ENCODE measurements at regions of chr14 and their contacts with region 1.

Region 1: DNA sequence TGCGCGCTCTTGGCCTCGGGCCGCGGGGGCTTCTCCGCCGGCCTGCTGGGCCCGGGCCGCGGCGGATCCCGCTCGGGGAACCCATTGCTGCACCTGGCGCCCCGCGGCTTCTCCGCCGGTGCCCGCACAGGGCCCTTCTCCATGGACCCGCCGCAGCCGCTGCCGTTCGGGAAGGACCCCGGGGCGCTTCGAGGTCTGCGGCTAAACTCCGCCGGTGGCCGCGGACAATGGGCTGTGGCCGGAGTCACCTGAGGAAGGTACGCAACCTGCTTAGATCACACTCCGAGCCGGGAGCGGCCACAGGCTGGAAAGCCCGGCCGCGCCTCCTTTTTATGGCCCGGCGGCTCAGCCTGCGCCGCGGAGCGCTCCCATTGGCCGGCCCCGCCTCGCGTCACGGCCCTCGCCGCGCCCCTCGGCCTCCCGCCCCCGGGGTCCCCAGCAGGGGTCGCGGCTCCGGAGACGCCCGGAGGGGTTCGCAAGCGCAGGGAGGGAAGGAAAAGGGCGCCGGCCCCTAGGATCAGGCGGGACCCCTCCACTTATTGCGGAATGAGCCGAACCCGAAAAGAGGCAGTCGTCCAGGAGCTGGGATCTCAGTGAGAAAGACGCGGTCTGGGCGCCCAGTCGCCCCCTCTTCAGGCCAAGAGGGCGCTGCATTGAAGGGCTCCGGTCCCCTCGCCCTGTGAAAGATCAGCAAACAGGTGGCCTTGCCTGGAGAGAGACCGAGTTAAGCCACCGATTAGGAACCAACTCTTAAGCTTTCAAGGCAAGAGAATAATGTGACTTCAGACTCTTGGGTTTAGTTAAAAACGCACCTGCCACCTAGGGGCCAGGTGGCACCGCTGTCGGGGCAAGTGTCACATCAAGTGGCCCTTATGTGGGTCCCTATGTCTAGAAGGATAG is at the start of gene GCH1:
- DNase-seq: peak; percentile 81
- H3K4me3 Mint-ChIP-seq: peak within 1 kb of the TSS; percentile 89
- H3K27ac Mint-ChIP-seq: peak within 1 kb of the TSS; percentile 85
- H3K4me1 Mint-ChIP-seq: peaks cover 46% of the 10 kb centered on the region
- H3K27me3 Mint-ChIP-seq: no peaks in the 10 kb centered on the region
- total RNA-seq, gene GCH1: 61.4 and 62.4 TPM in 2 replicates

Region 2: DNA sequence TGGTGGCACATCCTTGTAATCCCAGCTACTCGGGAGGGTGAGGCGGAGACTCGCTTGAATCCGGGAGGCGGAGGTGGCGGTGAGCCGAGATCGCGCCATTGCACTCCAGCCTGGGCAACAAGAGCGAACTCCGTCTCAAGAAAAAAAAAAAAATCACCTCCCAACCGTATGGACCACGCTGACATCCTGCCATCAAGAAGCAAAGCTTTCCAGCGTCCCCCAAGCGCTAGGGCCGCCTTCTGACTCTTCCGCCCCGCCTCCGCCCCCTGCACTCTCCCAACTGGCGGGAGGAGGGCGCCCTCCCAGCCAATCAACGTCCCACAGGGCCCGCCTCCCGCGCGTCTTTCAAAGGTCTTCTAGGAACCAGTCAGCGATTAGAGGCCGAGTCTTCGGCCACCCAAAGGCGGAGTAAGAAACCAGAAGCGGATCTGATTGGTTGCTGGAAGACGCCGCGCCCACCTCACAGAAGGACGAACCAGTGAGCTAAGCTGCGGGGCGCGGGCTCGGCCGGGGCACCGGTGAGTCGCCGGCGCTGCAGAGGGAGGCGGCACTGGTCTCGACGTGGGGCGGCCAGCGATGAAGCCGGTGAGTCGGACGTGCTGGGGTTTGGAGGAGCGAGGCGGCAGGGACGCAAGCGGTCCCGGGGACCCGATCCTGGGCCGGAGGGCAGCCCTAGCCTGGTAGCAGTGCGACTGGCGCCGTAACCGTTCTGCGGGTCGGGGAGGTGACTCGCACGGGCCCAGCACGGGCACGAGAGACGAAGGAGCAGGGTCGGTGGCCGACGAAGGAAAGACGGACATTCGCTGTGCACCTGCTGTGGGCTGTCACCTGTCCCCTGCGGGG is 506.1 kb before region 1 on chr14 and contains the start of gene CDKN3:
- intact Hi-C with region 1: loop called (anchors 1 kb)
- DNase-seq: peak; percentile 98
- H3K4me3 Mint-ChIP-seq: peak within 1 kb of the TSS; percentile 81
- H3K27ac Mint-ChIP-seq: peak within 1 kb of the TSS; percentile 85
- H3K4me1 Mint-ChIP-seq: peaks cover 16% of the 10 kb centered on the region
- H3K27me3 Mint-ChIP-seq: peaks cover 3% of the 10 kb centered on the region
- total RNA-seq, gene CDKN3: 36.5 and 39.2 TPM in 2 replicates

Region 3: DNA sequence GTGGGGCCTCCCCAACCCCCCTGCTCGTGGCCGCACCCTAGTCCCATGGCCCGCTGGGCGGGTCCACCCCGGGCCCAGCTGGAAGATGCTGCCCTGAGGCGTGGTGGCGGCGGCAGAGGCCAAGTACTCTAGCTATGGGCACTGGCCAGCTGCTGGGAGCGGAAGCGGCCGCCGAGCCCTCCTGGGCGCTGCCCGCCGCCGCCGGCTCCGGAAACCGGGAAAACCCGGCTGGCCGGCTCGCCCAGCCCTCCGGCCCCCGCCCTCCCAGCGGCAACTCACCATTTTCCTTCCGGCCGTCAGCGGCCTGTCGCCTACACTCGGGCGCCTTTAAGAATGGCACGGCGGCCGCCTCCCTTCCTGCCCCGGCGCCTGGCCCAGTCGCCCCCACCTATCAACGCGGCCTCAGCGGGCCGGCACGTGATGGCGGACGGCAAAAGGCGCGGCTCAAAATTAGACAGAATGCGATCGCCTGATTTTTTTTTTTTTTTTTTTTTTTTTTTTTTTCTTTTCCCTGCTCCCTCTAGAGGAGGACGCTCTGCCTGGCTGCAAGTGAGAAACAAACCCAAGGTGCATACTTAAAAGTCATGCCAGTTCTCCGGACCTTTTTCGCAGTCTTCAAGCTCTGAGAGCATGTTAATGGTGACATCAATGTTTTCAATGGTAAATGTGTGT is 414.0 kb before region 1 on chr14 and contains the start of gene GMFB:
- intact Hi-C with region 1: loop called (anchors 2 kb)
- DNase-seq: peak; percentile 79
- H3K4me3 Mint-ChIP-seq: peak within 1 kb of the TSS; percentile 87
- H3K27ac Mint-ChIP-seq: peak within 1 kb of the TSS; percentile 88
- H3K4me1 Mint-ChIP-seq: peaks cover 57% of the 10 kb centered on the region
- H3K27me3 Mint-ChIP-seq: no peaks in the 10 kb centered on the region
- total RNA-seq, gene GMFB: 39.5 and 39.7 TPM in 2 replicates

Region 4: DNA sequence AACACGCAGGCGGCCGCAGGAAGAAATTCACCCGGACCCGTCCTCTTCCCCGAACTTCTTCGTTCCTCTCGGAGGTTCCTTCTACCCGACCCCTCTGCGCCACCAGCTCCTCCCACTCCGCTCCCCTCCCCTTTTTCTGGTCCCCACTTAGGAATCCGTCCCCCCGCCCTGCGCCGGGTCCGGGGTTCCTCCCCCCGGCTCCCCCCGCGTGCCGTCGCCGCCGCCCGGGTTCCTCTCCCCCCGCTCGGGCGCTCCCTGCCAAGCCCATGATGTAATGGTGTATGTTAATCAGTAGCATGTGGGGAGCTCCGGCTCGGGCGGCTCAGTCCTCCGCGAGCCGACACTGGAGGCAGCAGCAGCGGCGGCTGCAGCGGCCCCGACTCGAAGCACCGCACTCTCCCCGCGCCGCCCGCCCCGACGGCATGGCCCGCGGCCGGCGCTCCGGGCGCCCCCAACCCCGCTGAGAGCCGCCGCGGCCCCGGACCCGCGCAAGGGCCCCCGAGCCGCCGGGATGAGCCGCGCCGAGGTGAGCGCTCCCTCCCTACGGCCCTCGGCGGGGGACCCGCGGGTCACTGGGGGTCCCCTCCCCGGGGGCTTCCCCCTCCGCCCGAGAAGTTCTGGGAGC is 336.9 kb before region 1 on chr14:
- intact Hi-C with region 1: loop called (anchors 2 kb)
- DNase-seq: peak; percentile 61
- H3K4me3 Mint-ChIP-seq: peak overlapping the region; percentile 75
- H3K27ac Mint-ChIP-seq: no peak overlapping the region
- H3K4me1 Mint-ChIP-seq: peaks cover 21% of the 10 kb centered on the region
- H3K27me3 Mint-ChIP-seq: peaks cover 54% of the 10 kb centered on the region

Region 5: GRCh38 chr14:55026793-55027561 is 124.2 kb after region 1 on chr14 and contains the starts of genes SOCS4 and WDHD1:
- intact Hi-C with region 1: loop called (anchors 2 kb)
- DNase-seq: peak; percentile 98
- H3K4me3 Mint-ChIP-seq: peak within 1 kb of the TSS; percentile 88
- H3K27ac Mint-ChIP-seq: peak within 1 kb of the TSS; percentile 86
- H3K4me1 Mint-ChIP-seq: peaks cover 63% of the 10 kb centered on the region
- H3K27me3 Mint-ChIP-seq: no peaks in the 10 kb centered on the region
- total RNA-seq, gene SOCS4: 40.5 and 42.3 TPM in 2 replicates
- total RNA-seq, gene WDHD1: 53.8 and 54.1 TPM in 2 replicates

Region 6: GRCh38 chr14:55373784-55374705 is 471.3 kb after region 1 on chr14:
- intact Hi-C with region 1: loop called (anchors 10 kb)
- DNase-seq: peak; percentile 35
- H3K4me3 Mint-ChIP-seq: peak overlapping the region; percentile 64
- H3K27ac Mint-ChIP-seq: peak overlapping the region; percentile 99
- H3K4me1 Mint-ChIP-seq: peaks cover 57% of the 10 kb centered on the region
- H3K27me3 Mint-ChIP-seq: no peaks in the 10 kb centered on the region

Measured in activated T-helper 1 cell treated with anti-CD3 and anti-CD28 coated beads, Interleukin-12 subunit alpha, Interleukin-12 subunit beta, Interleukin-2, Interleukin-4 antibody, amounts not matched to agents 30 ng/mL and 10 ng/mL and 1 ng/mL, durations not matched to agents 14 hours and 24 hours and 36 hours (primary cell).